Common myeloid progenitor, CD34-positive (primary cell): ENCODE measurements at regions of chr1 and their contacts with region 1.

Region 1: DNA sequence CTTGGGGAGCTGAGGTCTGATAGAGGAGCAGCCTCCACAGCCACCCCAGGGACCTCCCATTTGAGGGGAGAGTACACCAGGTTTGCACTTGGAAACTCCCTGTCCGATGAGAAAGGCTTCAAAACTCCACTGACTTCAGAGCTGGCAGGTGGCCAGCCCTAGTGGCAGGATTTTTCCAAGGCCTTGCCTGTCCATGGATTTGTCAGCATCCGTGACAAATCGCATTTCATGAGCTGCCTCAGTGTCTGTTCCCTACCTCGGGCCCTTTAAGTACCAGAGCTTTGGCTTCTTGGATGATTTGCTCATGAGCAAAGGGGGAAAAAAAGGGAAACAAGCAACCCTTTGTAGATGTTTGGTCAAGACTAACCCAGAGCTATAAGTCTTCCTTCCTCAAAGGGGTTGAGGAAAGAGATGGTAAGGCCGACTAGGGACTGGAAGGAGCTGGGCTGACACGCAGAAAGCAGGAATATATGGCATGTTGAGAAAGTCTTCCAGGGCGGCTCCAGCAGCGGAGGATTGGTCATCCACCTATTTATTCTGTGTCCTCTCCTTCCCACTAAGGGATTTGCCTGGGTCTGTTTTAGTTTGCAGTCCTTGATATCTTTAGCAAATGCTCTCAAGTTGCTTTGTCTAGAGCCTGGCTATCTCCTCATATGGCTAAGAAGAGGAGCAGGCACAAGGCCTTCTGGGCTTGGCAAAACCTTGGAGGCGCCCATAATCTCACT is 2.7 kb upstream of the HSPG2 start:
- DNase-seq: peak in 2 of 3 donors; percentile 80 to 82
- H3K4me3 ChIP-seq: peak overlapping the region in 2 of 7 experiments; percentile 16 to 24
- H3K27ac ChIP-seq: no peak overlapping the region
- H3K4me1 ChIP-seq: peaks cover 2 to 44% (median 40%) of the 10 kb centered on the region in 4 experiments
- H3K27me3 ChIP-seq: no peaks in the 10 kb centered on the region

Region 2: DNA sequence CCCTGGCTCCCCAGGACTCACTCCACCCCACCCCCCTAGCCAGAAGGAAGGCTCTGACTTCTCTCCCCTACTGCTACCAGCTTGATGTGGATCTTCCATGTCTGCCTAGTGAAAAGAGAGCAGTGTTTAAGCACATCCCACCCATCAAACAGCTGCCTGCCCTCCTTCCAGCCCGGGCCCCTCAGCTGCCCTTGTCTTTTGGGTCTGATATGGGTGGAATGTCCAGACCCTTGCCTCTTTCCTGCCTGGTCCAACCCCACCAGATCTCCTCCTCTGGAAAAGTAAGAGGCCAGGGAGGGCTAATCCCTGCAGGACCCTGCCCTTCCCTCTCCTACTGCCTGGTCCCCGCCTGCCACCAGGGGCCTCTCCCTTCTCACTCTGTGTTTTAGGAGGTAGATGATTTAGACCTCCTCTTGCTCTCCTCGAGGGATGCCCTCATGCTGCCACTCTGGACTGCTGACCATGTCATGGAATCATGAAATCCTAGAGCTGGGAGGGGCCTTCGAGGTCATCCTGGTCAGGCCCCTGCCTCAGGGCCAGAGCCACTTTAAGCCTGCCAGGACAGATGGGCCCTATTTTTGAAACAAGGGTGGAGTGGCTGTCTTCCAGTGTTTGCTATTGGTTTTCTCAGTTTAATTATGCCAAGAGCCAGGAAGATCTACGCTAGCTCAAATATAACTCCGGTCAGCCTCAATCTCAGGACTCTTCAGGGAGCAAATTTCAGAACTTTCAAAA is 13.1 kb after region 1 on chr1:
- CTCF ChIA-PET with region 1: interaction called, 12 read pairs
- POLR2A ChIA-PET with region 1: interaction called, 3 read pairs
- DNase-seq: no peak
- H3K4me3 ChIP-seq: no peak overlapping the region
- H3K27ac ChIP-seq: no peak overlapping the region
- H3K4me1 ChIP-seq: peaks cover 5 to 27% (median 26%) of the 10 kb centered on the region in 4 experiments
- H3K27me3 ChIP-seq: no peaks in the 10 kb centered on the region

Region 3: GRCh38 chr1:21963477-21964217 is 23.8 kb after region 1 on chr1:
- CTCF ChIA-PET with region 1: interaction called, 11 read pairs
- POLR2A ChIA-PET with region 1: interaction called, 3 read pairs
- DNase-seq: peak; percentile 73 to 90 (median 80)
- H3K4me3 ChIP-seq: no peak overlapping the region
- H3K27ac ChIP-seq: no peak overlapping the region
- H3K4me1 ChIP-seq: peaks cover 0 to 13% (median 5%) of the 10 kb centered on the region in 4 experiments
- H3K27me3 ChIP-seq: no peaks in the 10 kb centered on the region